ENCODE measurements at regions of chr7 and their contacts with region 1.

Region 1: GRCh38 chr7:90155206-90155605 is 937 bp downstream of the STEAP1 start:
- DNase-seq: no peak
- H3K4me3 ChIP-seq: no peak overlapping the region
- H3K27ac ChIP-seq: no peak overlapping the region
- H3K4me1 ChIP-seq: no peaks in the 10 kb centered on the region
- H3K27me3 ChIP-seq: no peaks in the 10 kb centered on the region
- CTCF ChIP-seq: no peak
- EP300 ChIP-seq: no peak
- POLR2A ChIP-seq: no peak

Region 2: DNA sequence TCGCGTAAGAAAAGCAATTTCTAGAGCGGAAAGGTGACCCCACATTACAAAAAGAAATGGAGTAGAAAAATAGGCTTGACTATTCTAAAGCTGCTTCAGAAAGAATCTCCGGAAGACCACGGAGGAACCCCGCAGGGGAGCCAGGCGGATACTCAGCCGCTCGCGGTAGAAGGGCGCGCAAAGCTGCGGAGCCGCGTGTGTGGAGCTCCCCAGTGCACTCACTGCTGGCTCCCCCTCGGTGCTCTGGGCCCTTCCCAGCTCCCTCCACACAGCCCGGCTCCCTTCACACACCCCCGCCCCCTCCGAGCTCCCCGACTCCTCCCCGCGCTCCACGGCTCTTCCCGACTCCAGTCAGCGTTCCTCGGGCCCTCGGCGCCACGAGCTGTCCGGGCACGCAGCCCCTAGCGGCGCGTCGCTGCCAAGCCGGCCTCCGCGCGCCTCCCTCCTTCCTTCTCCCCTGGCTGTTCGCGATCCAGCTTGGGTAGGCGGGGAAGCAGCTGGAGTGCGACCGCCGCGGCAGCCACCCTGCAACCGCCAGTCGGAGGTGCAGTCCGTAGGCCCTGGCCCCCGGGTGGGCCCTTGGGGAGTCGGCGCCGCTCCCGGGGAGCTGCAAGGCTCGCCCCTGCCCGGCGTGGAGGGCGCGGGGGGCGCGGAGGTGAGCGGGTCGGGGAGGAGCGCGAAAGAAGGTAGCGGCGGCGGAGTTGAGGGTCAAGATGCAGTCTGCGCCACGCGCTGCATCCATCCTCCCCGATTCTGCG is 56.4 kb after region 1 on chr7 and contains the start of gene STEAP2:
- intact Hi-C with region 1: loop called in 1 of 4 experiments (anchors 10 kb)
- DNase-seq: peak; percentile 93 to 96 (median 95)
- H3K4me3 ChIP-seq: peak within 1 kb of the TSS; percentile 68
- H3K27ac ChIP-seq: peak within 1 kb of the TSS; percentile 87 to 93
- H3K4me1 ChIP-seq: peaks cover 5% of the 10 kb centered on the region
- H3K27me3 ChIP-seq: no peaks in the 10 kb centered on the region
- CTCF ChIP-seq: peak; percentile 44 to 93 (median 72)
- EP300 ChIP-seq: no peak
- POLR2A ChIP-seq: peak; percentile 89
- total RNA-seq, gene STEAP2: 21.1 to 47.1 (median 27.6) TPM

Region 3: GRCh38 chr7:90256778-90257177 is 101.6 kb after region 1 on chr7:
- intact Hi-C with region 1: loop called in 2 of 4 experiments (anchors 5 to 10 kb)
- DNase-seq: no peak
- H3K4me3 ChIP-seq: no peak overlapping the region
- H3K27ac ChIP-seq: no peak overlapping the region
- H3K4me1 ChIP-seq: no peaks in the 10 kb centered on the region
- H3K27me3 ChIP-seq: no peaks in the 10 kb centered on the region
- CTCF ChIP-seq: no peak
- EP300 ChIP-seq: no peak
- POLR2A ChIP-seq: no peak

Region 4: DNA sequence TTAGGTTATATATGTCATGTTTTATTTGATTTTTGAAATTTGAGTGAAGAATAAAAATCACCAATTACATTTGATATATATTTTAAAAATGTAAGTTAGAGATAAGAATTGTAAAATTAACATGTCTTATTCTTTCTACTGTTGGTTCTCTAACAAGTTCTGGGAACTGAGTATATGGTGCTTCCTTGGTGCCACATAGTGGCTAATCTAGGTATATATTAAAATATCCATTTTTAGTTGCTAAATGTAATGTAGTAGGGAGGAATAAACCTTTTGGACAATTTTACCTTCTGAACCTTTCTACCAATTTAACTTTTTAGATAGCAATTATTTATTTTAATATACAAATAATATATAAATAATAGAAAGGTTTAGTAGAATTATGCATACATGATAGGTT is 107.2 kb after region 1 on chr7:
- intact Hi-C with region 1: loop called in 2 of 4 experiments (anchors 5 to 10 kb)
- DNase-seq: no peak
- H3K4me3 ChIP-seq: no peak overlapping the region
- H3K27ac ChIP-seq: no peak overlapping the region
- H3K4me1 ChIP-seq: no peaks in the 10 kb centered on the region
- H3K27me3 ChIP-seq: no peaks in the 10 kb centered on the region
- CTCF ChIP-seq: peak; percentile 50 to 55 (median 51)
- EP300 ChIP-seq: no peak
- POLR2A ChIP-seq: no peak

Region 5: DNA sequence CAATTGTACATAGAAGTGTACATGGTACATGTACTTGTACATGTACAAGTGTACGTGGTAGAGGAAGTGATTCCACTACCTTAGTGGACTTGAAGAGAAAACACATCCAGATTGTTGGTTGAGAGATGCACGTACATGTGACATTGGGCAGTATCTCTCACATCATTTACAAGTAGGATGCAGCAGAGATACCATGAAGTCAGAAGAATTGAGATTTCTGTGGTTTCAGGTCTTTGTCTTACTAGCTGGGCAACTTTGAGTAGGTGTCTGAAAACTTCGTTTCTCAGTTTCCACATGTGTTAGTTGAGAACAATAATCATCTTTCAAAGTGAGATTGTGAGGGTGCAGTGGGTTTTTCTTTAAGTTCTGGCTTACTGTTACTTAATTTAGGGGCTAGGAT is 269.5 kb after region 1 on chr7:
- intact Hi-C with region 1: loop called in 2 of 4 experiments (anchors 10 kb)
- DNase-seq: no peak
- H3K4me3 ChIP-seq: no peak overlapping the region
- H3K27ac ChIP-seq: no peak overlapping the region
- H3K4me1 ChIP-seq: no peaks in the 10 kb centered on the region
- H3K27me3 ChIP-seq: no peaks in the 10 kb centered on the region
- CTCF ChIP-seq: no peak
- EP300 ChIP-seq: no peak
- POLR2A ChIP-seq: no peak

Measured in ovary (tissue), 10 donors.